Right cardiac atrium (tissue), 5 donors: ENCODE measurements at regions of chr6 and their contacts with region 1.

Region 1: GRCh38 chr6:25342802-25343201 is 63.6 kb downstream of the CARMIL1 start:
- DNase-seq: no peak
- ATAC-seq: peak in 1 of 2 donors; percentile 62
- H3K4me3 ChIP-seq: no peak overlapping the region
- H3K27ac ChIP-seq: no peak overlapping the region
- H3K4me1 ChIP-seq: peaks cover 1% of the 10 kb centered on the region
- H3K27me3 ChIP-seq: no peaks in the 10 kb centered on the region

Region 2: DNA sequence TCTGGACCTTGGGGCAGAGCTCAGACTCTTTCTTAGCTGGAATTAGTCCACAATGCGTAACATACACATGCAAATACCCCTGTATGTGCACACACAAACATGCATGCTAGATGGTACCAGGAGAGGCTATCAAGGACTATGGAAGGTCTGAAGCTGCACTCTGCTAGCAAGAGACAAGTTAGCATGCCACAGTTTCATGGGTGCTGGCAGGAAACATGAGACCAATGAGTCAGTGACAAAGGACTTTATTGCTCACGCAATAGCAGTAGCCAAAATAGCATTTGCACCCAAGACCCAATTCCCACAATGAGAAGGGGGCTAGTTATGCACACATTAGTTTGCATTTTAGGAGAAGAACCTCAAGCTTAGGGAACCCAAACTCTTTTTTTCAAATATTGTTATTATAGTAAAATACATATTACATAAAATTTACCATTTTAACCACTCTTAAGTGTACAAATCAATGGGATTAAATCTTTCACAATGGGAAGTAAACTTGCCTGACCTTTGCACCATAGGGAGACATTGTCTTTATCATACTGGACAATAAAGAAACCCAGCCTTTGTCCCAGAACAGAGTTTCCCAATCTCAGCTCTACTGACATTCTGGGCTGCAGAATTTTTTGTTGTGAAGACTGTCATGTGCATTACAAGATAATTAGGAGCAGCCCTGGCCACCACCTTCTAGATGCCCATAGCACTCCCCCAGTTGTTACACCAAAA is 1147.7 kb before region 1 on chr6:
- intact Hi-C with region 1: no loop called
- DNase-seq: no peak
- ATAC-seq: no peak
- H3K4me3 ChIP-seq: no peak overlapping the region
- H3K27ac ChIP-seq: no peak overlapping the region
- H3K4me1 ChIP-seq: no peaks in the 10 kb centered on the region
- H3K27me3 ChIP-seq: no peaks in the 10 kb centered on the region

Region 3: DNA sequence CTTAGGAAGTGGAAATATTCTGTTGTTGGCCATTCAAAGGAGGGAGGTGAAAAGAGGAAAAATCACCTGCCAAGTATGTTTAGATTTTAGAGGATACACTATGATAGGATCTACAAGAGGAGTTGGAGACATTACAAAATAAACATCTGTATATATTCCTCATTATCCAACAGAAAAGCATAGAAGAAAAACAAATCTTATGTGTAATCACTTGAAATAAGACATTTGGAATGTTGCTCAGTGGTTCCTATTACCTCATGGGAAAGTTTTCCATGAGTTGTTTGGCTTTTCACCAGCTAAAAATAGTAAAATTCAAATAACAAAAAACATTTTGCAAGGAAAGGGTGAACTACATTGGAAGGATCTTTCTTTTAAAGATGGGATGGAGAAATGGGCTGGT is 140.3 kb before region 1 on chr6:
- intact Hi-C with region 1: no loop called
- DNase-seq: no peak
- ATAC-seq: no peak
- H3K4me3 ChIP-seq: no peak overlapping the region
- H3K27ac ChIP-seq: no peak overlapping the region
- H3K4me1 ChIP-seq: no peaks in the 10 kb centered on the region
- H3K27me3 ChIP-seq: no peaks in the 10 kb centered on the region

Region 4: GRCh38 chr6:25389471-25389870 is 46.7 kb after region 1 on chr6:
- intact Hi-C with region 1: no loop called
- DNase-seq: no peak
- ATAC-seq: peak; percentile 53 to 86
- H3K4me3 ChIP-seq: no peak overlapping the region
- H3K27ac ChIP-seq: no peak overlapping the region
- H3K4me1 ChIP-seq: no peaks in the 10 kb centered on the region
- H3K27me3 ChIP-seq: no peaks in the 10 kb centered on the region

Region 5: GRCh38 chr6:25490018-25490801 is 147.4 kb after region 1 on chr6:
- intact Hi-C with region 1: loop called in 1 of 4 experiments (anchors 10 kb)
- DNase-seq: peak; percentile 69 to 80 (median 78)
- ATAC-seq: peak; percentile 81 to 82
- H3K4me3 ChIP-seq: no peak overlapping the region
- H3K27ac ChIP-seq: no peak overlapping the region
- H3K4me1 ChIP-seq: peaks cover 2% of the 10 kb centered on the region
- H3K27me3 ChIP-seq: no peaks in the 10 kb centered on the region